Dorsolateral prefrontal cortex (tissue), 120 donors: ENCODE measurements at regions of chr4 and their contacts with region 1.

Region 1: DNA sequence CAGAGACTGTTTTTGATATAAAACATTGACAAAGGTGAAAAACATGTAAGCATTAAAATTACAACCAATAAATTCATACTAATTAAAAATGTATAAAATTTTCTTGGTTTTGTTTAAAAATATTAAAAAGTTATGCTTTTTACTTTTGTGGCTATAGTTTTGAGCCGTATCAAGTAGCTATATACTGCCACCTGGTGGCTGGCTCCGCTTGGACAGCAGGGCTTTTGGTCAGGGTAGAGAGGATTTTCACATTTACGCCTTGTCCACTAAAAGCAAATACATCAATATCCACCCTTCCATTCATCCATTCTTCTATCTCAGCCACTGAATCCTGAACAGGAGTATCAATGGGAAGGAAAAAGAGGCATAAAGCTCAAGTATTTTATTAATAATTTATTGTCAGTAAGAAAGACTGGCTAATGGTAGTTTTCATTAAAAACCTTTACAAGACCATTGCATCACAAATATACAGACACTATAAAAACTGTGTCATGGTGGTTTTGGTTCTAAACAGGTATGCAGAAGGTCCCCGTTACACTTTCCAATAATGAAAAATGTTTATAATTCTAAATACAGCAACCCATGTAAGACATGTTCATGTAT is 32.1 kb upstream of the MTNR1A start:
- DNase-seq: peak; percentile 56 to 86 (median 72)
- H3K4me3 ChIP-seq: no peak overlapping the region
- H3K27ac ChIP-seq: no peak overlapping the region
- H3K27me3 ChIP-seq: peaks cover 0 to 3% (median 0%) of the 10 kb centered on the region in 45 donors
- CTCF ChIP-seq: peak; percentile 84 to 99 (median 94)

Region 2: DNA sequence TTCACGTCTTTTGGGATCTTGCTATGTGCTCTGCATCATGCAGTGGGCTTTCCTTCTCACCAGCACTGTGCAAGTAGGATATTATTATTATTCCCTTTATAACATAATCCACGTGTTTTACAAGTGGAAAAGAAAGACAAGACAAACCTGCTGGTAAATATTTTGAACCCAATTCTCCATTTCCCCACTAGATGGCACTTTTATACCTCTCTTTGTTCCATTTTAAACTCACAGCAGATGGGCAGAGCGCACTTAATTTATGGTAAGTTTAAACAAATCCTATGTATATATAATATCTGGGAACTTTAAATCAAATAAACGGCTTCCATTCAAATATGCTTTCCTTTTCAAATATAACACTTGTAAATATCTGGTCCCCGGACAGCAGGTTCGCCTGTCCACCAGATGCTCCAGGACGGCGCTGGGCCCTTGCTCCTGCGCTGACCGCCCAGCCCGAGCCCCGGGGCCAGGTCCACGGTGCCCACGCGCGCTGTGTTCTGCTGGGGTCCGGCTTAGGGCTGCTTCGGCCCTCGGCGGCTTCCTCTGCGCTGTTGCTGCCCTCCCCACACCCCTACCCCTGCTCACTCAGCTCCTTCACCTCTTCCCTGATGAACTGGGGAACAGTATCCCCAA is 290.4 kb before region 1 on chr4:
- intact Hi-C with region 1: loop called (anchors 2 to 5 kb)
- DNase-seq: no peak
- H3K4me3 ChIP-seq: peak overlapping the region in 2 of 59 donors; percentile 12 to 30
- H3K27ac ChIP-seq: no peak overlapping the region
- H3K27me3 ChIP-seq: peaks cover 0 to 32% (median 9%) of the 10 kb centered on the region in 45 donors
- CTCF ChIP-seq: peak; percentile 32 to 90 (median 75)

Region 3: DNA sequence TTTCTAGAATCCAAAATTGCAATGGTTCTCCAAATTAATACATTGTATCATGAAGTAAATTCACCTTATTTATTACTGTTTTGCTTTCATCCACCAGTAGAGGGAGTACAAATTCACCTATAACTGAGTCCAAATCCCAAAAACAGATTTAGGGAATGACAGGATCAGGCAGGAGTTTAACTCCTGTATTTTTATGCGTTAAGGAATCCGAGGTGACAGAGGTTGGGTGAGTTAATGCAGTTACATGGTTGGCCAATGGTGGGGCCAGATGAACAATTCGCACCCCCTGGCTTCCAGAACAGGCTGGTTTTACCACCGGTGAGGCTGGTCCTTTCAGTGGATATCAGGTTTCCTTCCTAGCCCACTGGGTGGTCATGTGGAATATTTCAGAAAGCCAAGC is 114.6 kb before region 1 on chr4:
- intact Hi-C with region 1: loop called (anchors 5 kb)
- DNase-seq: no peak
- H3K4me3 ChIP-seq: no peak overlapping the region
- H3K27ac ChIP-seq: no peak overlapping the region
- H3K27me3 ChIP-seq: peaks cover 0 to 10% (median 0%) of the 10 kb centered on the region in 45 donors
- CTCF ChIP-seq: peak; percentile 41 to 78 (median 63)

Region 4: GRCh38 chr4:186554539-186554913 is 33.0 kb before region 1 on chr4:
- intact Hi-C with region 1: no loop called
- DNase-seq: peak in 1 of 10 donors; percentile 22
- H3K4me3 ChIP-seq: peak overlapping the region in 56 of 59 donors; percentile 11 to 69 (median 50)
- H3K27ac ChIP-seq: no peak overlapping the region
- H3K27me3 ChIP-seq: peaks cover 0 to 67% (median 33%) of the 10 kb centered on the region in 45 donors
- CTCF ChIP-seq: peak in 2 of 56 donors; percentile 6 to 21